Activated CD4-positive, alpha-beta memory T cell treated with anti-CD3 and anti-CD28 coated beads, Interleukin-2, amount 10 ng/mL, durations not matched to agents 7 days and 5 days (primary cell): ENCODE measurements at regions of chr11 and their contacts with region 1.

Region 1: GRCh38 chr11:66311965-66312548 is 4.8 kb downstream of the CD248 start:
- DNase-seq: peak; percentile 97
- H3K4me3 Mint-ChIP-seq: peak overlapping the region; percentile 85
- H3K27ac Mint-ChIP-seq: peak overlapping the region; percentile 90
- H3K4me1 Mint-ChIP-seq: peaks cover 16% of the 10 kb centered on the region
- H3K27me3 Mint-ChIP-seq: peaks cover 10% of the 10 kb centered on the region

Region 2: DNA sequence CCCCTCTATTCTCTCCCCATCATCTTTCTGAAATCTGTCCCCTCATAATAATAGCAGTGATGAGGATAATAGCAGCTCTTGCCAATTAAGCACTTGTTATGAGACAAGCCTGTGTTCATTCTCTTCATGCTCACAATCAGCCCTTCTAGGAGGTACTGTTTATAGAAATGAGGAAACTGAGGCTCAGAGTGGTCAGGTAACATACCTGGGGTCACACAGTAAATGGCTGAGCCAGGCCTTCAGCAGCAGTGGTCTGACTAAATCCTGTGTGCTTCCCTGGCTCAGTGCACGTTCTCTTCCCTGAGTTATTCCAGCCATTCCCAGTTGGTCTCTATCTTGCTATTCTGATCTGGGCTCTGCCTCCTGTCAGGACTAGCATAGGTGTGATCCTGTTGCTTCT is 37.8 kb before region 1 on chr11:
- CTCF ChIA-PET with region 1: no interaction called
- POLR2A ChIA-PET with region 1: no interaction called
- DNase-seq: no peak
- H3K4me3 Mint-ChIP-seq: no peak overlapping the region
- H3K27ac Mint-ChIP-seq: no peak overlapping the region
- H3K4me1 Mint-ChIP-seq: peaks cover 47% of the 10 kb centered on the region
- H3K27me3 Mint-ChIP-seq: peaks cover 6% of the 10 kb centered on the region

Region 3: GRCh38 chr11:66288671-66289547 is 23.1 kb before region 1 on chr11 and contains the start of gene YIF1A:
- CTCF ChIA-PET with region 1: interaction called, 33 read pairs
- POLR2A ChIA-PET with region 1: interaction called, 28 read pairs
- DNase-seq: peak; percentile 99
- H3K4me3 Mint-ChIP-seq: peak within 1 kb of the TSS; percentile 92
- H3K27ac Mint-ChIP-seq: peak within 1 kb of the TSS; percentile 83
- H3K4me1 Mint-ChIP-seq: peaks cover 42% of the 10 kb centered on the region
- H3K27me3 Mint-ChIP-seq: peaks cover 27% of the 10 kb centered on the region
- total RNA-seq, gene YIF1A: 49.5 to 52.5 TPM

Region 4: DNA sequence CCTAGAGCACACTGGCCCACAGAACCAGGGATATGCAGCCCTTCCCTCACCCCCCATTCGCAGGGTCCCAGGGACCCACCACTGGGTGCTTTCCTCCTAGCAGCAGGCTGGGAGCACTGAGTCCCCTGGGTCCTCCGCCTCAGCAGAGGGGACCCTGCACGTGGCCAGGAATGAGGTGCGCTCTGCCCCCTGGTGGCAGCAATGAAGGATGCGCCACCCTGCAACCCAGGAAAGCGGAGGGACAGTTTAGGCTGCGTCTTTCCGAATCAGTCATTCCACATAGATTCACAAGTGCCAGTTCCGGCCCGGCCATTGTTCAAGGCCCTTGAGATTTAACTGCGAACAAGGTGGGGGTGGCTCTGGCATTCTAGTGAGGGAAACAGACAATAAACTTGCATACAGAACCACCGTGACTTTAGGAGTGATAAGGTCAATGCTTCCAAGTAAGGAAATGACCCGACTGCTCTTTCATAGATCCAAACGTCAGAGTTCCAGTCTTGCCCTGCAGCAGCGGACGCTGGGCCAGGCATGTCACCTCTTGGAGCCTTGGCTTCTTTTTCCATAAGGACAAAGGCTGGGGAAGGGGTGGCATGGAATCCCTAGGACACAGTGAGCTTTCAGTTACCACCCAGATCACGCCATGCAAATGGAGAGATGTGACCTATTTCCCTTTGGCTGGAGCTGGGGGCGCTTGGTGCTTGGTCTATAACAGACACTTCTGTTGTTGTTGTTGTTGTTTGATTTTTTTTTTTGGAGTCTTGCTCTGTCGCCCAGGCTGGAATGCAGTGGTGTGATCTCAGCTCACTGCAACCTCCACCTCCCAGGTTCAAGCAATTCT is 16.5 kb after region 1 on chr11:
- CTCF ChIA-PET with region 1: interaction called, 73 read pairs
- POLR2A ChIA-PET with region 1: interaction called, 30 read pairs
- DNase-seq: peak; percentile 79
- H3K4me3 Mint-ChIP-seq: no peak overlapping the region
- H3K27ac Mint-ChIP-seq: peak overlapping the region; percentile 33
- H3K4me1 Mint-ChIP-seq: peaks cover 30% of the 10 kb centered on the region
- H3K27me3 Mint-ChIP-seq: no peaks in the 10 kb centered on the region

Region 5: DNA sequence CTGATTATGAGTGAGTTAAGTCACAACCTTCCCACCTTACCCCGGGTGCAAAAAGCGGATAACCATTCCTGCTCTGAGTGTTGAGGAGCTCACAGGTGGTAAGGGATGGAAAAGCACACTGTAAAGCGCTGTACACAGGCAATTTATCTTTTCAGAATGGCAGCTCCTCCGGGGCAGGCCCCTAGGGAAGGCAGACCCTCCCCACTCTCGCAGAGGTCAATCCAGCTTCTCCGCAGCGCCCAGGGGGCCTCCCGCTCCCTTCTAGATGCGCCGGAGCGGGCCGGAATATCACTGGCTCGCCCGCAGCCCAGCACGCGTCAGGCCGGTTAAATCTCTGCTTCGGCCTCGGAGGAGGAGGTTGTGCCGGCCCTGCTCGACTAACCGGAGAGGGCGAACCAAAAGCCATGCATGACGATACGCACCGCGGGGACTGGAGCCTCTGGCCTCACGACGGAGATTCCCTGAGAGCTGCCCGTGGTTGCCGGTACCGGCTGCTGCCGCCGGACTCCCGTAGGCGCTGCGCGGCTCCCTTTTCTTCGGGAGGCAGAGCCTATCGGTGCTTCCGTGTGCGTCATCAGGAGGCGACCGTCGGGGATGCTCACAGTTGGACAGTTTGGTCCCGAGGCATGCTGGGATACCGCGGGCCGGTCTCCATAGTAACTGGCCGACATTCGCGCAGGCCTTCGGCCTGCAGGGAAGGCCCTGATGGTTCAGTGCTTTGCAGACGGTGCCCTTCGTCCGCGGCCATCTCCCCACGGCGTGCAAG is 32.7 kb after region 1 on chr11 and contains the start of gene BRMS1:
- CTCF ChIA-PET with region 1: interaction called, 25 read pairs
- POLR2A ChIA-PET with region 1: interaction called, 18 read pairs
- DNase-seq: peak; percentile 97
- H3K4me3 Mint-ChIP-seq: peak within 1 kb of the TSS; percentile 96
- H3K27ac Mint-ChIP-seq: peak within 1 kb of the TSS; percentile 87
- H3K4me1 Mint-ChIP-seq: peaks cover 51% of the 10 kb centered on the region
- H3K27me3 Mint-ChIP-seq: no peaks in the 10 kb centered on the region
- total RNA-seq, gene BRMS1: 39.7 to 40.4 TPM

Region 6: DNA sequence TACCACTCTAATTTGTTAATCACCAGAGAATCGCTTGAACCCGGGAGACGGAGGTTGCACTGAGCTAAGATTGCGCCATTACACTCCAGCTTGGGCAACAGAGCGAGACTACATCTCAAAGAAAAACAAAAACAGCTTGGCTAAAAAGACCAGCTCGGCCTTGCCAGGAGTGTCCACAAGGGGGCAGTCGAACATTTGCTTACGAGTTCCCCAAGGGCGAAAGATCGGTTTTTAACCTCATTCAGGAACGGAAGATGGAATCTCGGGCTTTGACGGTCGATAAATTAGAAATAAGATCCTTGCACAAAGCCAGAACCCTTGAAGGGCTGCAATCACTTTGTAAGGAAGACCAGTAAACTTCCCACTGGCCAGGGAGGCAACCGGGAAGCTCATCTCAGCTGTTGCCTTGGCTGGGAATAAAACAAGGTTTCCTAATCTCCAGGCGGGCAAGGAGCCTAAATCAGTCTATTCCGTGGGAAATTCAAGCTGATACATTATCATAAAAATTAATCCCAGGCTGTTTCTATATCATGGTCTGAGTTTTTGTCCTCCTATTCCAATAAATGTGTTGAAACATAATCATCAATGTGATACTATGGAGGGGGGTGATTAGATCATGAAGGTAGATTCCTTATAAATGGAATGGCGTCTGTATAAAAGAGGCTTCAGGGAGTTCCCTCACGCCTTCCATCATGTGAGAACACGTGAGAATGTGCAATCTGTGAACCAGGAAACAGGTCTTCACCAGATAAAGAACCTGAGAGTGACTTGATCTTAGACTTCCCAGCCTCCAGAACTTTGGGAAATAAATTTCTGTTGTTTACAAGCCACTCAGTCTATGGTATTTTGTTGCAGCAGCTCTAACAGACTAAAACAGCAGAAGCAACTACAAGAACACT is 74.4 kb after region 1 on chr11:
- CTCF ChIA-PET with region 1: interaction called, 52 read pairs
- POLR2A ChIA-PET with region 1: interaction called, 3 read pairs
- DNase-seq: peak; percentile 83
- H3K4me3 Mint-ChIP-seq: peak overlapping the region; percentile 12
- H3K27ac Mint-ChIP-seq: no peak overlapping the region
- H3K4me1 Mint-ChIP-seq: peaks cover 6% of the 10 kb centered on the region
- H3K27me3 Mint-ChIP-seq: peaks cover 7% of the 10 kb centered on the region